ENCODE measurements at regions of chr17 and their contacts with region 1.

Region 1: GRCh38 chr17:47840740-47841603 is at the start of gene SCRN2:
- DNase-seq: peak; percentile 97
- H3K4me3 ChIP-seq: peak within 1 kb of the TSS; percentile 94 to 96
- H3K27ac ChIP-seq: peak within 1 kb of the TSS; percentile 29 to 89; a peak in 3 of 4 replicates
- H3K4me1 ChIP-seq: peaks cover 8 to 30% of the 10 kb centered on the region in 2 experiments; a peak in 2 of 4 replicates
- H3K27me3 ChIP-seq: peaks cover 10% of the 10 kb centered on the region
- CTCF ChIP-seq: peak; percentile 99
- EP300 ChIP-seq: no peak; a peak in 1 of 4 replicates
- RAD21 ChIP-seq: peak; percentile 97
- polyA plus RNA-seq, gene SCRN2: 135 and 139 TPM in 2 replicates

Region 2: GRCh38 chr17:46964315-46965253 is 876.4 kb before region 1 on chr17:
- CTCF ChIA-PET with region 1: no interaction called
- POLR2A ChIA-PET with region 1: no interaction called
- DNase-seq: no peak
- H3K4me3 ChIP-seq: no peak overlapping the region
- H3K27ac ChIP-seq: no peak overlapping the region
- H3K4me1 ChIP-seq: peaks cover 0 to 2% of the 10 kb centered on the region in 2 experiments; a peak in 1 of 4 replicates
- H3K27me3 ChIP-seq: no peaks in the 10 kb centered on the region
- CTCF ChIP-seq: no peak
- EP300 ChIP-seq: no peak
- RAD21 ChIP-seq: no peak

Region 3: DNA sequence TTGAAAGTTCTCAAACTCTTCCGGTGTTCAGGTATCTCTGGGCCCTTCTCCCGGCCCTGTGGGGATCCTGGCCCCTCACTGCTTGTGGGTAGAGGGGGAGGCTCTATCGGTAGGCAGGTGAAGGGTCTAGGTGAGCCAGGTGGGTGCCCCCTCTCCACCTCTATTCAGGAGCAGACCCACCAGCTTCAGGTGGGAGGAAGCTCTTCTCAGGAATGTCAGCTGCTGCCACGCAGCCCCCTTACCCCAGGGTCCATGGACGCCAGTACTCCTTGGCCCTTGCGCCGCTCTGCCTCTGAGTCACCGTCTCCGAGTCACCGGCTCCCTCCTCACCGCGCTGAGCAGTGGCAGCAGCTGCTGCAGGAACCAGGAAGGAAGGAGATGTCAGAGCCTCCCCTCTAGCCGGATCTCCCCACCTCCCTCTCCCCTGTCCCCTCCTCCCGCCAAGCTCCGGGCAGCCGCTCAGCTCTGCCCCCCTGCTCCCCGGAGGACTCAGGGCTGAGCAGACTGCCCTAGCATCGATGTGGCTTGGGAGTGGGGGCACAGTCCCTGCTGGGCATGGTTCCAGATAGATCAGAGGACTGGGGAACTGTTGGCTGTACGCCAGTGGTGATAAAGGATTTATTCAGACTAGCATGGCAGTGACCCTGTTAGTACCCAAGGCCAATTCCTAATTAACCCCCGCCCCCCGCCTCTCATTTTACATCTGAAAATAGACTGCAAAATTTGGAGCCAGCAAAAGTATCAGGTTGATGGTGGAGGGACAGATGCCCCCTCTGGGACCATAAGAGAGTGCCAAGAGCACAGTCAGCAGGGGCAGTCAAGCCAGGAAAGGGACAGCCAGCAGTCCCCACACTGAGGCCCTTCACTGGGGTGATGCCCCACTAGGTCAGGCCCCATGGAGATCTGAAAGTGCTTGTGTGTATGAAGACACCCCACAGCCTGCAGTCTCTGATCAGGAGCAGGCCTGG is 19.3 kb before region 1 on chr17 and contains the start of gene OSBPL7:
- CTCF ChIA-PET with region 1: interaction called, 573 read pairs
- POLR2A ChIA-PET with region 1: interaction called, 3 read pairs
- DNase-seq: peak; percentile 99
- H3K4me3 ChIP-seq: peak within 1 kb of the TSS; percentile 90 to 93
- H3K27ac ChIP-seq: peak within 1 kb of the TSS; percentile 37 to 88
- H3K4me1 ChIP-seq: peaks cover 11 to 26% of the 10 kb centered on the region in 2 experiments; a peak in 3 of 4 replicates
- H3K27me3 ChIP-seq: no peaks in the 10 kb centered on the region
- CTCF ChIP-seq: peak; percentile 57
- EP300 ChIP-seq: no peak
- RAD21 ChIP-seq: peak; percentile 15; the same call in 1 of the 2 replicates
- polyA plus RNA-seq, gene OSBPL7: 23.7 and 24.7 TPM in 2 replicates

Region 4: DNA sequence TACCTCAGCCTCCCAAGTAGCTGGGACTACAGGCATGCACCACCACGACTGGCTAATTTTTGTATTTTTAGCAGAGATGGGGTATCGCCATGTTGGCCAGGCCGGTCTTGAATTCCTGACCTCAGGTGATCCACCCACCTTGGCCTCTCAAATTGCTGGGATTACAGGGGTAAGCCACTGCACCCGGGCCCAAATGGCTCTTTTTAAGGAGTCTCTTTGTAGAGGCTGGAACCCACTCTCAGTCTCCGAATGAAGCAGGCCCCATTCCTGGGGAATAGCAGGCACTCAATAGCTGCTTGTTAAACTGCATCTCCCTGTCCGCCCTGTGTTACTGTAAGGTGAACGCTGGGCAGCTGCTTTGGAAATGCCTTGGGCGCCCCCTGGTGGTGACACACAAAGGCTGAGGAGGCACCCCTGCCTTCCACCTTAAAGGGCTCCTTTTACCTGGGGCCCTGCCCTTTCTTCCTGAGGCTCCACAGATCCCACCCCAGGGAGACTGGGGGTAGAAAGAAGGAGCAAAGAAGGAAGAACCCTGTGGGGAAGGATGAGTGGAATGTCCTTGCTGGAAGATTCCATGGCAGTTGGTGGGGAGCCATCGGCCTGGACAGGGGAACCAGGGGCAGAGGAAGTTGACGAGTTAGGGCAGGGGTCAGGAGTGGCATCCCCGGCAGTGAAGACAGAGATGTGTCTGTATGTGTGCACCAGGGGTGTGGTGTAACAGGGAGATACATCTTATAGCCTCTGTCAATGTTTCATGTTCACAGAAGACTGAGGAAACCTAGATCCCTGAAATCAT is 49.0 kb after region 1 on chr17:
- CTCF ChIA-PET with region 1: interaction called, 1,447 read pairs
- POLR2A ChIA-PET with region 1: interaction called, 26 read pairs
- DNase-seq: peak; percentile 85
- H3K4me3 ChIP-seq: no peak overlapping the region; a peak in 1 of 4 replicates
- H3K27ac ChIP-seq: no peak overlapping the region
- H3K4me1 ChIP-seq: peaks cover 4% of the 10 kb centered on the region in 2 experiments; a peak in 3 of 4 replicates
- H3K27me3 ChIP-seq: no peaks in the 10 kb centered on the region
- CTCF ChIP-seq: peak; percentile 100
- EP300 ChIP-seq: no peak
- RAD21 ChIP-seq: peak; percentile 99

Region 5: GRCh38 chr17:47905221-47905781 is 64.3 kb after region 1 on chr17:
- CTCF ChIA-PET with region 1: interaction called, 18 read pairs
- POLR2A ChIA-PET with region 1: no interaction called
- DNase-seq: no peak
- H3K4me3 ChIP-seq: no peak overlapping the region
- H3K27ac ChIP-seq: peak overlapping the region; percentile 58 to 66
- H3K4me1 ChIP-seq: peaks cover 3 to 8% of the 10 kb centered on the region in 2 experiments; a peak in 2 of 4 replicates
- H3K27me3 ChIP-seq: no peaks in the 10 kb centered on the region
- CTCF ChIP-seq: no peak
- EP300 ChIP-seq: no peak
- RAD21 ChIP-seq: no peak

Region 6: DNA sequence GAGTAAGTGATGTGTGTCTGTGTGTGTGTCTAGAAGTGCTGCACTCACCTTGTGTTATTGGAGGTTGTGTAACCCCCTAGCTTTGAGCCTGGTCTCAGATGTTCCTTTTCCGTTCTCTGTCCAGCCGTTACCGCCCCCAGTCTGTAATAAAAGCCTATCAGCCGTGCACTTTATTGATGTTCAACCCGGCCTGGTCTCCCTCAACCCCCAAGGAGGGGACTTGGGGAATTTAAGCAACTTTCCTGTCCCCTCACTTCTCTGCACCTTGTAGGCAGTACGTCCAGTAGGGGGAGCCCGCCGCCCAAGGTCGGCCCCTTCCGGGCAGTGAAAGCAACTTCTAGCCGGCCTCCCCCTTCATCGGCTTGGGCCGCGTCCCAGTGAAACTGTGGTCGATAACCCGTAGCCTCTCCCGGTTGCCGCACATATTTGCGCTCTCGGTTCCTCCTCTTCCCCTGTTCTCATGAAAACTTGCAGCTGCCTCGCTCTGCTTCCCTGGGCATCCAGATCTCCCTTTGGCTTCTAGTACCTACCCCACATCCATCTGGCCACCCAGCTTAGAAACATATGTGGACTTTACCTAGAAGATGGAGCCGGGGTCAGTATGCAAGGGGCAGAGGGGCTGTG is 108.3 kb after region 1 on chr17:
- CTCF ChIA-PET with region 1: interaction called, 21 read pairs
- POLR2A ChIA-PET with region 1: interaction called, 3 read pairs
- DNase-seq: peak; percentile 90
- H3K4me3 ChIP-seq: peak overlapping the region; percentile 28 to 29
- H3K27ac ChIP-seq: peak overlapping the region; percentile 29 to 75; a peak in 3 of 4 replicates
- H3K4me1 ChIP-seq: peaks cover 4 to 11% of the 10 kb centered on the region in 2 experiments; a peak in 3 of 4 replicates
- H3K27me3 ChIP-seq: no peaks in the 10 kb centered on the region
- CTCF ChIP-seq: peak; percentile 100
- EP300 ChIP-seq: no peak
- RAD21 ChIP-seq: peak; percentile 91

Region 7: GRCh38 chr17:47978324-47978723 is 137.4 kb after region 1 on chr17:
- CTCF ChIA-PET with region 1: interaction called, 19 read pairs
- POLR2A ChIA-PET with region 1: no interaction called
- DNase-seq: peak; percentile 95
- H3K4me3 ChIP-seq: no peak overlapping the region; a peak in 1 of 4 replicates
- H3K27ac ChIP-seq: peak overlapping the region in 1 of 2 experiments; percentile 98; a peak in 2 of 4 replicates
- H3K4me1 ChIP-seq: peaks cover 0 to 49% of the 10 kb centered on the region in 2 experiments; a peak in 2 of 4 replicates
- H3K27me3 ChIP-seq: no peaks in the 10 kb centered on the region
- CTCF ChIP-seq: peak; percentile 99
- EP300 ChIP-seq: no peak
- RAD21 ChIP-seq: peak; percentile 99

Region 8: GRCh38 chr17:48283411-48283810 is 442.4 kb after region 1 on chr17:
- CTCF ChIA-PET with region 1: no interaction called
- POLR2A ChIA-PET with region 1: no interaction called
- DNase-seq: no peak
- H3K4me3 ChIP-seq: no peak overlapping the region
- H3K27ac ChIP-seq: no peak overlapping the region
- H3K4me1 ChIP-seq: no peaks in the 10 kb centered on the region
- H3K27me3 ChIP-seq: peaks cover 73% of the 10 kb centered on the region; the same call in 1 of the 2 replicates
- CTCF ChIP-seq: no peak
- EP300 ChIP-seq: no peak
- RAD21 ChIP-seq: no peak

Region 9: DNA sequence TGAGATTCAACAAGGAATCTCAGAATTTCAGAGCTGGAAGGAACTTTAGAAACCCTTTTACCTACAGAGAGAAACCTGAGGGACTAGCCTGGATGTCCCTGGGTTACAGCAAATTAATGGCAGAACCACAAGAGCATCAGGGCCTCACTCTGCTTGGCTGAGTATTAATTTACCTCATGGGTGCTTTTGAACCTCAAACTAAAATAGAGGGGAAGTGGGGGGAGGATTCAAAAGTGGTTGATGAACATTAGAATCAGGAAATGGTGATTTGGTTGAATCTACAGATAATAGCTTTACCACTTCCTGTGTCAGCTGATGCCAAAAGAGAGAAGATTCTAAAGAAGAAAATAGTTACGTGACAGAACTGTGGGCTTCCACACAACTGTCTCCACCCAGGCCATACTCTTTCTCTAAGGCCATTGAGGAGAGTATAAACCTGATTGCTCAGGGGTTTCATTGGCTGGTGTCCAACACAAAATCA is 600.3 kb after region 1 on chr17:
- CTCF ChIA-PET with region 1: no interaction called
- POLR2A ChIA-PET with region 1: no interaction called
- DNase-seq: no peak
- H3K4me3 ChIP-seq: no peak overlapping the region
- H3K27ac ChIP-seq: no peak overlapping the region
- H3K4me1 ChIP-seq: no peaks in the 10 kb centered on the region; a peak in 1 of 4 replicates
- H3K27me3 ChIP-seq: peaks cover 93% of the 10 kb centered on the region
- CTCF ChIP-seq: no peak
- EP300 ChIP-seq: no peak
- RAD21 ChIP-seq: no peak